GM13976 (cell line): ENCODE measurements at regions of chr4 and their contacts with region 1.

Region 1: DNA sequence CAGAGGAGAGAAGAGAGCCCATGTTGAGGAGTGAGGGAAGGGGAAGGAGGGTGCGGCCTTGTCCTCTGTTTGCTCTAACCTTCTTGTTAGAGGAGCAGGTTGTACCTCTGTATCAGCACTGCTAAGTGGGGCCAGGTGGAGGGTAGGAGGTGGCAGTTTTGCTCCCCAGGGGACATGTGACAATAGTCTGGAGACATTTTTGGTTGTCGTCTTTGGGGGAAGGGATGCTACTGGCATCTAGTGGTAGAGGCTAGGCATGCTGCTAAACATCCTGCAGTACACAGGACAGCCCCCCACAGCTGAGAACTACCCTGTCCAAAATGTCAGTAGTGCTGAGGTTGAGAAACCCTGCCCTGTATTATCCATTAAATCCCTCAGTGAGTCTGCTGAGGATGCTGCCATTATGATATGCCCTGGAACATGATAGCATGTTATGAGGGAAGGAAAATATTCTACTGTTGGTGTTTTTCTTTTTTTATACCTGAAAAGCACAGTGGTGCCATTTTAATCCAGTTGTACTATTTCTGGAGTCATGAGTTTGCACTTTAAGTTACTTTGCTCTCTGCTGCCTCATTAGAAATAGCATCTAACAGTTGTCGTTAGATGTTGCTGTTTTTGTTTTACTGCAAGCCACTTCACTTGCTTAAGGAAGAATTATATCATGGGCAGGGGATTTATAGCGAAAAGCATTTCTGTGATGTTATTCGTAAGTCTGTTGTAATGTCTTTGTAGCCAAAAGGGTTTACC is 90.6 kb downstream of the LRP2BP start:
- DNase-seq: peak; percentile 41
- CTCF ChIP-seq: peak; percentile 55

Region 2: DNA sequence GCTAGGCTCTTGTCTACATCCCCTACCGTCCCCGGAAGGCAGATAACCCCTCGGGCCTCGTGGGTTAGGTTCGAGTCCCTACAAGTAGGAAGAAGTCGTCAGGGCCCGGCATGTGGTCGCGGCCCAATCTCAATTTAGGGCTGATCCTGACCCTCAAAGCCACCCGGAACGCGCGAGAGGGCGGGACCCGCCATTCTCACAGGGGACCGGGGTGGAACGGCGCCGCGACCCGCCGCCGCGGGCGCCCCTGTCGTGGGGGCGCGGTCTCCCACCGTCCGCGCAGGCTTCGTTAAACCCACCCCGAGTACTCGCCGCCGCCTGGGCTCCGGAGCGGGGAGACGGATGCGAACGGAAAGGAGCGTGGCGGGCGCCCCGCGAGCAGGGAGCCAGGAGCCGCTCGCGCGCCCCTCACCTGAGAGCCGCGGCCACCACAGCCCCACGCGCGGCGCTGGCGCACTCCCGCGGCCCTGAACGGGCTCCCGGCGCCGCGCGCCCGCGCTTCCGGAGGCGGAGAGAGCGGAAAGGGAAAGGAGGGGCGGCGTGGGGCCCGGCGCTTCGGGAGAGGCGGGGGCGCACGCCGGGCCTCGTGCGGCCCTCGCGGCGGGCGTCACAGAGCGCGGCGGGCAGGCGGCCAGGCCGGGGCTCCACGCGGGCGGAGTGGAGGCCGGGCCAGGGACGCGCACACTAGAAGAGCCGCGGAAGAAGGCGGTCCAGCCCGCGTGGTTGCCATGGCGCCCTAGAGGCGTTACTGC is 101.5 kb before region 1 on chr4 and contains the start of gene CFAP97:
- in situ Hi-C with region 1: loop called (anchors 10 kb)
- DNase-seq: peak; percentile 86
- CTCF ChIP-seq: no peak